ENCODE measurements at regions of chr17 and their contacts with region 1.

Region 1: DNA sequence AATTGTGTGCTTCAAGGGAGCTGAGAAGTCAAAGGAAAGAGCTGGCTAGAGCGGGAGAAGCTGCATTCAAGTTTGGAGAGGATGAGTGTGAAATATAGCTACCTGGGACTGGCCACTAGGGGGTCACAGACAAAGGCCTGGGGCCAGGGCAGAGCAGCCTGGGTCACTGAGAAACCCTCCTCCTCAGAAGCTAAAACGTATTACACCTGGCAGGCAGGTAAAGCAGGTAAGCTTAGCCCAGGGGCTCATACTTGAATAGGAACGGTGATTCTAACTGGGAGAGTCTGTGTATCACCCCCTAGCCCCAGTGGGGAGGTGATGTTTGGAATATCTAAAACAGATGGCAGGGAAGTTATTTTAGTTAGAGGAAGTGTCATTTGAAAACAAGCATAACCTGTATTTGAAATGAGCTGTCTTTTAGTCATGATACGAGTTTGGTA is 6.8 kb downstream of the KRT37 start:
- DNase-seq: peak in 1 of 2 experiments; percentile 51
- H3K4me3 ChIP-seq: no peak overlapping the region
- H3K27ac ChIP-seq: no peak overlapping the region
- H3K4me1 ChIP-seq: peaks cover 0 to 7% (median 0%) of the 10 kb centered on the region in 4 experiments; a peak in 4 of 7 replicates
- H3K27me3 ChIP-seq: no peaks in the 10 kb centered on the region; a peak in 2 of 7 replicates
- CTCF ChIP-seq: peak; percentile 66 to 84 (median 71)
- EP300 ChIP-seq: no peak
- POLR2A ChIP-seq: no peak
- RAD21 ChIP-seq: peak; percentile 59 to 68

Region 2: GRCh38 chr17:41324180-41325070 is 93.2 kb before region 1 on chr17:
- CTCF ChIA-PET with region 1: no interaction called
- POLR2A ChIA-PET with region 1: no interaction called
- DNase-seq: peak; percentile 10 to 61
- H3K4me3 ChIP-seq: no peak overlapping the region
- H3K27ac ChIP-seq: no peak overlapping the region
- H3K4me1 ChIP-seq: no peaks in the 10 kb centered on the region; a peak in 1 of 7 replicates
- H3K27me3 ChIP-seq: no peaks in the 10 kb centered on the region
- CTCF ChIP-seq: peak; percentile 69 to 75 (median 69)
- EP300 ChIP-seq: no peak
- POLR2A ChIP-seq: no peak
- RAD21 ChIP-seq: peak; percentile 60 to 78

Region 3: DNA sequence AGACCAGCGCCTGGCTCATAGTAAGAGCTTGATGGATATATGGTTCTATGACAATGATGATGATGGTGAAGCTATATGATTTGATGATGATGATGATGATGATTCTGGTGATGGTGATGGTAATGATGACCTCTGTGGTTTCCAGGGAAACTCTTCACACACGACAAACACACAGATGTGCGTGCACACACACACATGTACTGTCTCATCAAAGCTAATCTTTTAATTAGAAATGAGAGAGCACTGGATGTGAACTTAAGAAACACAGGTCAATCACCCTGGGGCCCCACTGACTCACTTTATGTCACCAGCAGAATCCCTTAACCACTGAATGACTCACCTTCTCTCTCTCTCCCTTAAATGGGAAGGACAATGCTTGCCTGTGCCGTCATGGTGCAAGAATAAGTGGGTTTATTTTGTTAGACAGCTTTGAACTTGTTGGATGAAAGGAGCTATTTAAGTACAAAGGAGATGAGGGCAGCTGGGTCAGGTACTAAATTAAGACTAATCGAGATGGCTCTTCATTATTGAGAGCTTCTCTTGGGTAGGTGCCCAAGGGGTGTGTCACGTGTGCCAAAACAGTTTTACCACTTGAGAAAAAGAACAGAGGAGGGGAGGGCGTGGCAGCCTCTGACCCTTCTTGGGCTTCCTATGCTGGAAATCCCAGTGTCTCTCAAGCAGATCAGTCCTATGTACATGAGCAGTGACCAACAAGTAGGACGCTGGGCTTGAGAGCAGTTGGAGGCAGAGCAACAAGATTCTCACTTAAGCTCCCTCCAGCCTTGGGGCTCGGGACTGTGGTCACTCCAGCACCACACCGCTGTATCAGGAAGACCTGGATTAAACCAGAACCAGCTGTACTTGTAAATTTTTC is 13.6 kb before region 1 on chr17:
- CTCF ChIA-PET with region 1: interaction called, 51 read pairs
- POLR2A ChIA-PET with region 1: no interaction called
- DNase-seq: no peak
- H3K4me3 ChIP-seq: no peak overlapping the region
- H3K27ac ChIP-seq: no peak overlapping the region
- H3K4me1 ChIP-seq: no peaks in the 10 kb centered on the region; a peak in 1 of 7 replicates
- H3K27me3 ChIP-seq: no peaks in the 10 kb centered on the region; a peak in 1 of 7 replicates
- CTCF ChIP-seq: no peak
- EP300 ChIP-seq: no peak
- POLR2A ChIP-seq: no peak
- RAD21 ChIP-seq: no peak

Region 4: DNA sequence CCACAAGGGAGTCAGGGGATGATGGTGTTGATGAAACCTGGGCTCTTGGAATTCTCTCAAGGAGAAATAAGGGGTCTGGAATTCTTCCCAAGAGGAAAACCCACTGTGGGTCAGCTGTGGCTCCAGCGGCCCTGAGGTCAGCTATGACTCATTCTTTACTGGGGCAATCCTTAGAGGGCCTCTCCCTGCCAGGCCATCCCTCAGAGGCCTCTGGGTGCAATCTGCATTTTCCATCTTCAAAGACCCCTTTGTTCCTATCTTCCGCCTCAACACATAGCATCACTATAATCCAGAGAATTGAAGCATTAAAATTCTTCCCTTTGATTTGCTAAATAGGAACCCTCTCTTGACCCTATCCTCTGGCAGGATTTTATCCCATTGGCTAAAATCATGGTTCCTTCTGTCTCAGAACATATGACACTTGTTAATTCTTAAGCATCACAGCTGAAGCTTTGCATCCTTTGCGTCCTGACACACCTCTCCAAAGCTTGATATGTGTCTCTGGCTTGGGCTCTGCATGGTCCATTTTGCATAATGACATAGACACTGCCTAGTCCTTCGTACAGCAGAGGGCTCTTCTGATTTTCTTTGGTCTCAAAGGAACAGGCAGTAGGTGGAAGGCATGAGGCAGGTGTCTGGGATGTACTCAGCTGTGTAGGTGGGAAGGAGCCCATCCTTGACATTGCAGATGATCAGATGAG is 11.1 kb after region 1 on chr17:
- CTCF ChIA-PET with region 1: interaction called, 14 read pairs
- POLR2A ChIA-PET with region 1: no interaction called
- DNase-seq: no peak
- H3K4me3 ChIP-seq: no peak overlapping the region
- H3K27ac ChIP-seq: no peak overlapping the region
- H3K4me1 ChIP-seq: peaks cover 0 to 3% (median 0%) of the 10 kb centered on the region in 4 experiments; a peak in 1 of 7 replicates
- H3K27me3 ChIP-seq: no peaks in the 10 kb centered on the region
- CTCF ChIP-seq: no peak
- EP300 ChIP-seq: no peak
- POLR2A ChIP-seq: no peak
- RAD21 ChIP-seq: no peak

Region 5: GRCh38 chr17:41434415-41434814 is 16.8 kb after region 1 on chr17:
- CTCF ChIA-PET with region 1: interaction called, 14 read pairs
- POLR2A ChIA-PET with region 1: no interaction called
- DNase-seq: no peak
- H3K4me3 ChIP-seq: no peak overlapping the region
- H3K27ac ChIP-seq: no peak overlapping the region
- H3K4me1 ChIP-seq: no peaks in the 10 kb centered on the region
- H3K27me3 ChIP-seq: no peaks in the 10 kb centered on the region
- CTCF ChIP-seq: no peak
- EP300 ChIP-seq: no peak
- POLR2A ChIP-seq: no peak
- RAD21 ChIP-seq: no peak

Region 6: GRCh38 chr17:41446806-41447205 is 29.2 kb after region 1 on chr17:
- CTCF ChIA-PET with region 1: interaction called, 14 read pairs
- POLR2A ChIA-PET with region 1: no interaction called
- DNase-seq: no peak
- H3K4me3 ChIP-seq: no peak overlapping the region
- H3K27ac ChIP-seq: no peak overlapping the region
- H3K4me1 ChIP-seq: no peaks in the 10 kb centered on the region; a peak in 1 of 7 replicates
- H3K27me3 ChIP-seq: no peaks in the 10 kb centered on the region; a peak in 1 of 7 replicates
- CTCF ChIP-seq: no peak
- EP300 ChIP-seq: no peak
- POLR2A ChIP-seq: no peak
- RAD21 ChIP-seq: no peak

Region 7: GRCh38 chr17:41456208-41456607 is 38.6 kb after region 1 on chr17:
- CTCF ChIA-PET with region 1: interaction called, 10 read pairs
- POLR2A ChIA-PET with region 1: no interaction called
- DNase-seq: peak in 1 of 2 experiments; percentile 49
- H3K4me3 ChIP-seq: no peak overlapping the region
- H3K27ac ChIP-seq: no peak overlapping the region
- H3K4me1 ChIP-seq: no peaks in the 10 kb centered on the region
- H3K27me3 ChIP-seq: no peaks in the 10 kb centered on the region
- CTCF ChIP-seq: peak; percentile 45 to 70 (median 58)
- EP300 ChIP-seq: no peak
- POLR2A ChIP-seq: no peak
- RAD21 ChIP-seq: peak; percentile 64 to 70

Region 8: DNA sequence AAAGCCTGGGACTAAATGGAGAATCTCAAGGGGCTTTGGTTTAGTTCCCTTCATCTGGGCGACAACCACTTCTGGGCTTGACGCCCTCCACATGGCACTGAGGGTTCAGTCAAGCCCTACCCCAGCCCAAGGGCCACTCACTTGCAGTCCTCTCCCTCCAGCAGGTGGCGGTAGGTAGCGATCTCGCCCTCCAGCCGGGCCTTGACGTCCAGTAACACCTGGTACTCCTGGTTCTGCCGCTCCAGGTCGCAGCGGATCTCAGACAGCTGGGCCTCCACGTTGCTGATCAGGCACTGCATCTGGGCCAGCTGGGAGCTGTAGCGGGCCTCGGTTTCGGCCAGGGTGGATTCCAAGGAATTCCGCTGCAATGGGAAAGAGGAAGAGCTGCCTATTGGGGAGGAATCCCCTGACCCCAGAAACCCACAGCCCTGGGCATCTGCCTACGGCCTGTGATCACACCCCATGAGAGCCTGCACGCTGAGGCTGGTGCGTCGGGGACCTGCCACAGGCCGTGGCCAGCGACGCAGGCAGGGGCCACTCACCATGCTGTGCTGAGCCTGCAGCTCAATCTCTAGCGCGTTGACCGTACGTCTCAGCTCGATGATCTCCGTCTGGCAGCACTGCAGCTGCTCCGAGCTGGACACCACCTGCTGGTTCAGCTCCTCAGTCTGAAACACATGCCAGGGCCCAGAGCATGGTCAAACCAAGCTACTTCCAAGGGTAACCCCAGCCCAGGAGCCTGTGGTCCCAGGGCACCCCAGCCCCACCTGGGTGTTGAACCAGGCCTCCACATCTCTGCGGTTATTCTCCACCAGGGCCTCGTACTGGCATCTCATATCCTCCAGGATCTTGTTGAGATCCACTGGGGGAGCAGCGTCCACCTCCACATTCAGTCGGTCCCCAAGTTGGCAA is 69.5 kb after region 1 on chr17:
- CTCF ChIA-PET with region 1: interaction called, 16 read pairs
- POLR2A ChIA-PET with region 1: no interaction called
- DNase-seq: peak; percentile 59 to 97
- H3K4me3 ChIP-seq: no peak overlapping the region
- H3K27ac ChIP-seq: no peak overlapping the region
- H3K4me1 ChIP-seq: no peaks in the 10 kb centered on the region; a peak in 2 of 7 replicates
- H3K27me3 ChIP-seq: peaks cover 0 to 12% (median 6%) of the 10 kb centered on the region in 4 experiments; a peak in 6 of 7 replicates
- CTCF ChIP-seq: peak; percentile 90 to 98 (median 93)
- EP300 ChIP-seq: no peak
- POLR2A ChIP-seq: no peak
- RAD21 ChIP-seq: peak; percentile 75 to 83